B cell (primary cell): ENCODE measurements at regions of chr3 and their contacts with region 1.

Region 1: DNA sequence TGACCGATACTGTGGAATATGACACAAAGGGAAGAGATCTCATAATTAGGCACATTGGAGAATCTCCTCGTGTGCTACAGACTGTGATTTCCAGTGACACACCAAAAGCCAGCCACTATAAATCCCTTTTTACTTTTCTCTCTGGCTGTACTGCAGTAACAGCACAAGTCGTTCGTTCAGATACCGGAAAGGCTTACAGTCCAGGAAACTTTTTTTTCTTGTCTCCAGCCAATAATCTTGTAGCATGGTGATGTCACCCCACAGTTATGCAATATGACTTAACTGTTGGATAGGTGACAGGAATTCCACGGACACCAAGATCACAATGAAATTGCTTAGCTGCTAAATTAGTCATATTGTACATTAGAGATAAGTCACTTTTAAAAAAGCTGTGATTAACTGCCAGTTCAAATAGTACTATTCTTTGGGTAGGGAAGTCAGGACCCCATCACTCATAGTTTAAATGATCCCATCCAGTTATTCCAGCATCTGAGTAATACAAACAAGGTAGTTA is 36.3 kb upstream of the TSC22D2 start:
- DNase-seq: no peak
- ATAC-seq: no peak
- H3K4me3 ChIP-seq: no peak overlapping the region
- H3K4me3 Mint-ChIP-seq: no peak overlapping the region
- H3K27ac ChIP-seq: no peak overlapping the region
- H3K27ac Mint-ChIP-seq: no peak overlapping the region
- H3K4me1 ChIP-seq: peaks cover 3 to 4% of the 10 kb centered on the region in 2 donors
- H3K4me1 Mint-ChIP-seq: peaks cover 16% of the 10 kb centered on the region
- H3K27me3 ChIP-seq: no peaks in the 10 kb centered on the region
- H3K27me3 Mint-ChIP-seq: no peaks in the 10 kb centered on the region
- CTCF ChIP-seq: no peak

Region 2: DNA sequence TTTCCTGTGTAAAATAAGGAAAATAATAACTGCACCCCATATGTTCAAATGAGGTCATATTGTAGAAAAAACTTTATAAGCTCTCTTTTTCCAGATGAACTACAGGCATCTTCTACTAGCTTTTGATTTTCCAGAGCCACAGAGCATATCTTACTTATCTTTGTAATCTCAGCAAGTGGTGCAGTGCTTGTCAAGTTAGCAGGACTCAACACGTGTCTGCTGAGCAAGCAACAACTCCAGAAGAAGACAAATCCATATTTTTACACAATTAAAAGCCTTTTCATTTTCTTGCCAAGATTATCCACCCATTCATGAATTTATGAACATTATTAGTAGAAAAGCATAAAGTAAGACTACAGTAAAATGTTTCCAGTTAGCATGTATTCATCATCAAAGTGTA is 21.9 kb after region 1 on chr3:
- CTCF ChIA-PET with region 1: no interaction called
- POLR2A ChIA-PET with region 1: no interaction called
- intact Hi-C with region 1: loop called (anchors 2 kb)
- DNase-seq: no peak
- ATAC-seq: no peak
- H3K4me3 ChIP-seq: no peak overlapping the region
- H3K4me3 Mint-ChIP-seq: no peak overlapping the region
- H3K27ac ChIP-seq: no peak overlapping the region
- H3K27ac Mint-ChIP-seq: no peak overlapping the region
- H3K4me1 ChIP-seq: no peaks in the 10 kb centered on the region
- H3K4me1 Mint-ChIP-seq: peaks cover 2% of the 10 kb centered on the region
- H3K27me3 ChIP-seq: no peaks in the 10 kb centered on the region
- H3K27me3 Mint-ChIP-seq: no peaks in the 10 kb centered on the region
- CTCF ChIP-seq: no peak